MCF 10A (cell line): ENCODE measurements at regions of chr6 and their contacts with region 1.

Region 1: GRCh38 chr6:40907198-40907704 is 131.8 kb downstream of the UNC5CL start:
- DNase-seq: peak; percentile 96
- H3K4me3 Mint-ChIP-seq: peak overlapping the region; percentile 45
- H3K27ac Mint-ChIP-seq: peak overlapping the region; percentile 87
- H3K4me1 Mint-ChIP-seq: peaks cover 19% of the 10 kb centered on the region
- H3K27me3 Mint-ChIP-seq: no peaks in the 10 kb centered on the region
- CTCF ChIP-seq: no peak

Region 2: GRCh38 chr6:40947876-40948526 is 40.8 kb after region 1 on chr6:
- CTCF ChIA-PET with region 1: interaction called, 3 read pairs
- POLR2A ChIA-PET with region 1: no interaction called
- intact Hi-C with region 1: loop called (anchors 5 kb)
- DNase-seq: peak; percentile 34
- H3K4me3 Mint-ChIP-seq: no peak overlapping the region
- H3K27ac Mint-ChIP-seq: no peak overlapping the region
- H3K4me1 Mint-ChIP-seq: peaks cover 26% of the 10 kb centered on the region
- H3K27me3 Mint-ChIP-seq: no peaks in the 10 kb centered on the region
- CTCF ChIP-seq: no peak